GM10248 (cell line): ENCODE measurements at regions of chr2 and their contacts with region 1.

Region 1: DNA sequence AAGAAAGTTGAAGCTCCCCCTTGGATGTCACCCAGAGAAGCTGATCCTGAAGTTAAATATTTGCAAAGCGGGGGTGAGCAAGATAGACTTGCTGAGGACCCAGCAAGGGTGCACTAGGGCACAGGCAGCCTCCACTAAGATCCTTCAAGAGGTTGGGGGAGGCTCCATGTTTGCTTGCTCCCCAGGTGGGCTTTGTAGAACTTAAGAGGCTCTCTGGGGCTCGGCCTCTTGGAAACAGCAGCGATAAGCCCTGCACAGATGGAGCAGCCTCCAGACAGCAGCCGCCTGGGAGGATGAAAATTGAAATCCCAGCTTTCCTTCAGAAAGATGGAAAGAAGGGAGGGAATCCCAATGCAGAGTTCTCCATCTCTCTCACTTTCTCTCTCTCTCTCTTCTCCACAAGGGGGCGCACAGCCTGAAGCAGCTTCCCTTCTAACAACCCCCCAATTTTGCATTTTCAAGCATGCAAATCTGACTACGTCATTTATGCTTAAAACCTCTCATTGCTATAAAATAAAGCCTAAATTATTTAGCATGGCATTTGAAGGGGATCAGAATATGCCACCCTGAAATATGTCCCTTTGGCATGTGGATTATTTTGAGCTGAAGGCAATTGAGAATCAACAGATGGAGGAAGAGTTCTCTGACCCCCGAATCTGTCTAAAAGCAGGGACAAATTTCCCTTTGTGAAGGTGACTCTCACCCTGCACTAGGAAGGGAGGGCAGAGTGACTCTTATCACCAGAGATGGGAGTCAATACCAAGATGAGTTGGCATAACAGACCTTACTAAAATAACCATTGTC is 185.7 kb upstream of the KLHL29 start:
- DNase-seq: peak; percentile 20
- CTCF ChIP-seq: peak; percentile 42

Region 2: GRCh38 chr2:23188658-23189057 is 10.7 kb before region 1 on chr2:
- CTCF ChIA-PET with region 1: interaction called, 28 read pairs
- POLR2A ChIA-PET with region 1: no interaction called
- DNase-seq: no peak
- CTCF ChIP-seq: no peak